HepG2 (cell line): ENCODE measurements at regions of chr6 and their contacts with region 1.

Region 1: GRCh38 chr6:131379948-131380347 is 193.1 kb upstream of the ARG1 start:
- DNase-seq: no peak
- ATAC-seq: no peak
- H3K4me3 ChIP-seq: no peak overlapping the region
- H3K27ac ChIP-seq: no peak overlapping the region
- H3K4me1 ChIP-seq: no peaks in the 10 kb centered on the region
- H3K27me3 ChIP-seq: peaks cover 0 to 35% of the 10 kb centered on the region in 2 experiments; a peak in 3 of 5 replicates
- CTCF ChIP-seq: no peak
- EP300 ChIP-seq: no peak
- POLR2A ChIP-seq: no peak
- RAD21 ChIP-seq: no peak

Region 2: DNA sequence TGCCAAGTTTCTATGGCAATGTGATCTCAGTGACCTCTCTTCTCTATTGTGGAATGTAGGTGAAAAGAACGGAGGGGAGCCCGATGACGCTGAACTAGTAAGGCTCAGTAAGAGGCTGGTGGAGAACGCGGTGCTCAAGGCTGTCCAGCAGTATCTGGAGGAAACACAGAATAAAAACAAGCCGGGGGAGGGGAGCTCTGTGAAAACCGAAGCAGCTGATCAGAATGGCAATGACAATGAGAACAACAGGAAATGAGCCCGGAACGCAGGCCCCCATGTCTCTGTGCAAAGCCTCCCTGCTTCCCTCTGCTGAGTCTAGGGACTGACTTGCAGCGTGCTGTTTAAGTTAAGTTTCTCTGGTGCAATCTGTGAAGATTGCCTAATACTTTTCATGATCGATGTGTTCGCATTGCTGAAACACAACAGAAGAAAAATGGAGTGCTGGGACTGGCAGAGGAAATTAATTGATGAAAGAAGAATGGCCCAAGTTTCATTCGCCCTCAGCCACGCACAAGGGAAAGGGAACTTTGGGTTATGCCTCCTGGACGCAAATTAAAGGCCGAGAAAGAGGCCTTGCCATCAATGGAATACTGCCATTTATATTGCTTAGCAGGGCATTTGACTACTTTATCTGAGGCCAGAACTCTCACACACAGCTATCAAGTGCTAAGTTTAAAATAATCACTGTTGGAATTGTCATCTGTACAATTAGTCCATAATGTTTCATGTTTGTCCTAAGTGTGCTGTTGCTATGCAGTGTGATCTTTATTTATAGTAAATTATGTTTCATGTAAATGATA is 98.3 kb before region 1 on chr6:
- CTCF ChIA-PET with region 1: no interaction called
- POLR2A ChIA-PET with region 1: no interaction called
- in situ Hi-C with region 1: no loop called
- intact Hi-C with region 1: no loop called
- DNase-seq: no peak
- ATAC-seq: no peak
- H3K4me3 ChIP-seq: no peak overlapping the region
- H3K27ac ChIP-seq: no peak overlapping the region
- H3K4me1 ChIP-seq: no peaks in the 10 kb centered on the region
- H3K27me3 ChIP-seq: no peaks in the 10 kb centered on the region
- CTCF ChIP-seq: no peak
- EP300 ChIP-seq: no peak
- POLR2A ChIP-seq: no peak
- RAD21 ChIP-seq: no peak

Region 3: DNA sequence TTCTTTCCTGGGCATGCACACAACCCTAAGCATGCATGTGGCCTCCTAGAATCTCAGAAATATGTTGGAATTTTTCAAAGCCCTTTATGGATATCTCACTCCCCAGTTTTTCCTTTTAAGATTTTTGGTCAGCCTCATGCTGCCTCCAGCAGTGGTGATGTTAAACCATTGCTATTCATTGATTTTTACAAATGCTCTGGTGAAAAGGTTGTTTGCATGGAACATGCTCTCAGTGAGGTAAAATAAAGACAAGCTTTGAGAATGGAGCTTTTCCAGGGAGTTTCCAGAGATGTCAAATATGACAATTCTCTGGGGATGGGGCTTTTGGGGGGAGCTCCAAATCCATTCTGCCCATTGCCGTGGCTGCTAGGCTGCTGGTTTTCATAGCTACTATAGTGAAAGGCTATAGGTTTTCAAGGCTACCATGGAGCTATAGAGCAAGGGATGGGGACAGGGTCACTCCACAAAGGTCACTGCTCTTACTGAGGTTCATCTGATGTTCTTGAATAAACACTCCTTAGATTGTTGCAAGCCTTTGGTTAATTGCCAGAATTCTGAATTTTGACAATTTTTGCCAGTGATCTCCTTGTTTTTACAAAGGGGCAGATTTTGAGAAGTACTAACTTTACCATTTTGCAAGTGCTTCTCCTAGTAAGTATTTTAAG is 15.0 kb after region 1 on chr6:
- CTCF ChIA-PET with region 1: no interaction called
- POLR2A ChIA-PET with region 1: no interaction called
- in situ Hi-C with region 1: no loop called
- intact Hi-C with region 1: loop called (anchors 1 kb)
- DNase-seq: no peak
- ATAC-seq: no peak
- H3K4me3 ChIP-seq: no peak overlapping the region
- H3K27ac ChIP-seq: no peak overlapping the region
- H3K4me1 ChIP-seq: no peaks in the 10 kb centered on the region
- H3K27me3 ChIP-seq: 0 out of 5 replicates have a peak, but pooled peaks cover 0 to 4% of the 10 kb centered on the region in 2 experiments
- CTCF ChIP-seq: no peak
- EP300 ChIP-seq: no peak
- POLR2A ChIP-seq: no peak
- RAD21 ChIP-seq: no peak

Region 4: GRCh38 chr6:131615275-131615674 is 235.3 kb after region 1 on chr6:
- CTCF ChIA-PET with region 1: no interaction called
- POLR2A ChIA-PET with region 1: no interaction called
- in situ Hi-C with region 1: no loop called
- intact Hi-C with region 1: no loop called
- DNase-seq: no peak
- ATAC-seq: no peak
- H3K4me3 ChIP-seq: no peak overlapping the region
- H3K27ac ChIP-seq: no peak overlapping the region
- H3K4me1 ChIP-seq: no peaks in the 10 kb centered on the region
- H3K27me3 ChIP-seq: no peaks in the 10 kb centered on the region
- CTCF ChIP-seq: no peak
- EP300 ChIP-seq: no peak
- POLR2A ChIP-seq: no peak
- RAD21 ChIP-seq: no peak